HEK293 (cell line): ENCODE measurements at regions of chr18 and their contacts with region 1.

Region 1: GRCh38 chr18:5021558-5021957 is 175.5 kb downstream of the AKAIN1 start:
- H3K4me3 ChIP-seq: no peak overlapping the region
- H3K27ac ChIP-seq: no peak overlapping the region
- H3K4me1 ChIP-seq: no peaks in the 10 kb centered on the region
- CTCF ChIP-seq: no peak

Region 2: GRCh38 chr18:5057386-5058348 is 36.1 kb after region 1 on chr18:
- CTCF ChIA-PET with region 1: interaction called, 17 read pairs
- POLR2A ChIA-PET with region 1: no interaction called
- H3K4me3 ChIP-seq: no peak overlapping the region
- H3K27ac ChIP-seq: no peak overlapping the region
- H3K4me1 ChIP-seq: no peaks in the 10 kb centered on the region
- CTCF ChIP-seq: peak; percentile 28; the same call in 1 of the 2 replicates

Region 3: DNA sequence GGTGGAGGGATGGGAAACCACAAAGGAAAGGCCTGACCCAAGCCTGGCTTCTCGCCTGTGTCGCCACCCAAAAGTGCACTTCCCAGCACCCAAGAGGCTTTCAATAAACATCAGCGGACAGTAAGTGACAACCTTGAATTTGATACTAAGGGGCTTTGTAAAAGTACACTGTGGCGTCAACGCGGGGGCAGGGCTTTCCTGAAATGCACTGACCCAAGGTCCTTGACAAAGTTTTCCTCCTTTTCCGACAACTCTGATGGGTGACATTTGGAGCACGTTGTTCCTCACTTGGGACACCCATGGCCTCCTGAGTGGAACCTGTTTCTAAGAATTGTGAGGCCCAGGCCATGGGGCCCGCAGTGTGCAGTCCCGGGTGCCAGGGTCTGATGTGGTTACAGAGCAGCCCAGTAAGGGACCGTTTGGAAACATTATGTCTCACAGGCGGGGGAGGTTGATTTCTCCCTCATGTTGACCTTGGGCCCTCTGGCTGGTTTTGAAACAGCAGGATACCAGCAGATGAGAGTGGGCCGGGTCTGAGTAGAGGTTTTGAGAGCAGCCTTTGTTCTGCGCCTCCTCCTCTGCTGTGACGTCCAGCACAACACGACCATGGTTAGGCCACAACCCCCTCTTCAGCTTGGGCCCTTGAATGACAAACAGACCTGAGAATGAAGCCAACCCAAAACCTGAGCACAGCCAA is 276.7 kb after region 1 on chr18:
- CTCF ChIA-PET with region 1: no interaction called
- POLR2A ChIA-PET with region 1: no interaction called
- H3K4me3 ChIP-seq: no peak overlapping the region
- H3K27ac ChIP-seq: no peak overlapping the region
- H3K4me1 ChIP-seq: no peaks in the 10 kb centered on the region; the same call in 1 of the 2 replicates
- CTCF ChIP-seq: no peak